Common myeloid progenitor, CD34-positive (primary cell): ENCODE measurements at regions of chr3 and their contacts with region 1.

Region 1: DNA sequence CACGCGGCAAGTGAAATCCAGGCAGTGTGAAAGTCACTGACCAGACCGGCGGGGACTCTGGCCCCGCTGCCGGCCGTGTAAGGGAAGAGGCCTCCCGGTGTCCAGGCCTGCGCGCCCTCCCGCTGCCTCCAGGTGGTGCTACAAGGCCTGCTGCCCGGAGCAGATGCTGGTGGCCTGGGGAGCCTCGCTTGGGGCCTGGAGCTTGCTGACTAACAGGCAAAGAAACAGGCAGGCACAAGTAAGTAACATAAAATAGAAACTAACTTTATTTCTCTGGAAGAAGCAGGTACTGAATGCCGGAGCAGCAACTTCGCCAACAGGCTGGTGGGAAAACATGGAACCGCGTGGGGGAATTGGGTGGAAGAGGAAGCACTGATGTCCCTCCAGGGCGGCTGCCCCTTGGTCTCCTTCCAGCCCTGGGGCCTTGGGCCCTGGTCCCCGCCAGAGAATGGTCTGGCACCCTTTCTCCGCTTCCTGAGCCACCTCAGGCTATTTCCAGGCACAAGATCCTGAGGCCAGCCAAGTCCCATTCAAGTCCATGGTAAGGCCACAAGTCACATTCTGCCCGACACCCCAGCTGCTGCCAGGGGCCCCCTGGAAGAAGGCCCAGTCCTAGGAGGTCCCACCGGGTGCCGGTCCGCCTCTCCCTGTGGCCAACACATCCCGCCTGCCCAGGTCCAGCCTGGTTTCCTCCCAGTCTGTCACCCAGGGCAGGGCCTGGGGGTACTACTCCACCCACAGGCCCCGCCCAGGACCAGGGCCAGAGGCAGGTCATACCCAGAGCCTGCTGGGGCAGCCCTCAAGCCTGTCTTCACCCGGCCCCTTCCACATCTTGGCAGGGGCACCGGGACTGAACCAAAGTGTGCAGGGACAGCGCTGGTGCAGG is 45.0 kb downstream of the TNK2 start:
- DNase-seq: peak; percentile 72 to 83 (median 83)
- H3K4me3 ChIP-seq: no peak overlapping the region
- H3K27ac ChIP-seq: no peak overlapping the region
- H3K4me1 ChIP-seq: peaks cover 0 to 23% (median 7%) of the 10 kb centered on the region in 4 experiments
- H3K27me3 ChIP-seq: no peaks in the 10 kb centered on the region

Region 2: DNA sequence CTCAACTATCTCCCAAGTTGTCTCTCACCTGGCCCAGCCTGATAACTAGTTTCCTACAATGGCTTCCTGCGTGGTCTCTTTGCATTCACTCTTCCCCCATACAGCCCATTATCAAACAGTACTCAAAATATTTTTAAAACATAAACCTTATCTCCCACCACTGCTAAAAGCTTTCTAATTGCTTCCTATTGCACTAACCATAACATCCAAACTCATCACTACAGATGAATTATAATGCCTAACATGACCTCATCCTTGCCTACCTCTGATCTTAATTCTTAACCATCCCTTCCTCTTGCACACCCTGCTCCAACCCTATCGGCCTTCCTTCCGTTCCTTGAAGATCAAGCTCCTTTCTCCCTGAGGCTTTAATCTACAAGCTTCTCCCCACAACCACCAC is 437.5 kb before region 1 on chr3:
- CTCF ChIA-PET with region 1: no interaction called
- POLR2A ChIA-PET with region 1: no interaction called
- DNase-seq: peak; percentile 17 to 42 (median 23)
- H3K4me3 ChIP-seq: peak overlapping the region in 2 of 7 experiments; percentile 32 to 42
- H3K27ac ChIP-seq: no peak overlapping the region
- H3K4me1 ChIP-seq: peaks cover 6 to 18% (median 12%) of the 10 kb centered on the region in 4 experiments
- H3K27me3 ChIP-seq: no peaks in the 10 kb centered on the region

Region 3: GRCh38 chr3:195839282-195840010 is 23.9 kb before region 1 on chr3:
- CTCF ChIA-PET with region 1: no interaction called
- POLR2A ChIA-PET with region 1: no interaction called
- DNase-seq: no peak
- H3K4me3 ChIP-seq: no peak overlapping the region
- H3K27ac ChIP-seq: no peak overlapping the region
- H3K4me1 ChIP-seq: no peaks in the 10 kb centered on the region
- H3K27me3 ChIP-seq: no peaks in the 10 kb centered on the region

Region 4: GRCh38 chr3:195894780-195895607 is 31.6 kb after region 1 on chr3:
- CTCF ChIA-PET with region 1: interaction called, 238 read pairs
- POLR2A ChIA-PET with region 1: interaction called, 3 read pairs
- DNase-seq: peak; percentile 79 to 85 (median 82)
- H3K4me3 ChIP-seq: peak overlapping the region; percentile 36 to 88 (median 82)
- H3K27ac ChIP-seq: peak overlapping the region; percentile 50 to 83
- H3K4me1 ChIP-seq: peaks cover 4 to 73% (median 67%) of the 10 kb centered on the region in 4 experiments
- H3K27me3 ChIP-seq: no peaks in the 10 kb centered on the region